ENCODE measurements at regions of chr10 and their contacts with region 1.

Region 1: GRCh38 chr10:72331601-72332422 is 22.9 kb downstream of the DNAJB12 start:
- DNase-seq: peak; percentile 92
- H3K4me3 ChIP-seq: no peak overlapping the region
- H3K27ac ChIP-seq: peak overlapping the region; percentile 73 to 84
- H3K4me1 ChIP-seq: peaks cover 88% of the 10 kb centered on the region
- H3K27me3 ChIP-seq: no peaks in the 10 kb centered on the region
- CTCF ChIP-seq: peak in 2 of 3 experiments; percentile 21 to 51
- POLR2A ChIP-seq: no peak

Region 2: GRCh38 chr10:71893920-71894319 is 437.9 kb before region 1 on chr10:
- intact Hi-C with region 1: loop called (anchors 10 kb)
- DNase-seq: no peak
- H3K4me3 ChIP-seq: no peak overlapping the region
- H3K27ac ChIP-seq: no peak overlapping the region
- H3K4me1 ChIP-seq: peaks cover 5% of the 10 kb centered on the region
- H3K27me3 ChIP-seq: no peaks in the 10 kb centered on the region
- CTCF ChIP-seq: no peak
- POLR2A ChIP-seq: no peak

Region 3: DNA sequence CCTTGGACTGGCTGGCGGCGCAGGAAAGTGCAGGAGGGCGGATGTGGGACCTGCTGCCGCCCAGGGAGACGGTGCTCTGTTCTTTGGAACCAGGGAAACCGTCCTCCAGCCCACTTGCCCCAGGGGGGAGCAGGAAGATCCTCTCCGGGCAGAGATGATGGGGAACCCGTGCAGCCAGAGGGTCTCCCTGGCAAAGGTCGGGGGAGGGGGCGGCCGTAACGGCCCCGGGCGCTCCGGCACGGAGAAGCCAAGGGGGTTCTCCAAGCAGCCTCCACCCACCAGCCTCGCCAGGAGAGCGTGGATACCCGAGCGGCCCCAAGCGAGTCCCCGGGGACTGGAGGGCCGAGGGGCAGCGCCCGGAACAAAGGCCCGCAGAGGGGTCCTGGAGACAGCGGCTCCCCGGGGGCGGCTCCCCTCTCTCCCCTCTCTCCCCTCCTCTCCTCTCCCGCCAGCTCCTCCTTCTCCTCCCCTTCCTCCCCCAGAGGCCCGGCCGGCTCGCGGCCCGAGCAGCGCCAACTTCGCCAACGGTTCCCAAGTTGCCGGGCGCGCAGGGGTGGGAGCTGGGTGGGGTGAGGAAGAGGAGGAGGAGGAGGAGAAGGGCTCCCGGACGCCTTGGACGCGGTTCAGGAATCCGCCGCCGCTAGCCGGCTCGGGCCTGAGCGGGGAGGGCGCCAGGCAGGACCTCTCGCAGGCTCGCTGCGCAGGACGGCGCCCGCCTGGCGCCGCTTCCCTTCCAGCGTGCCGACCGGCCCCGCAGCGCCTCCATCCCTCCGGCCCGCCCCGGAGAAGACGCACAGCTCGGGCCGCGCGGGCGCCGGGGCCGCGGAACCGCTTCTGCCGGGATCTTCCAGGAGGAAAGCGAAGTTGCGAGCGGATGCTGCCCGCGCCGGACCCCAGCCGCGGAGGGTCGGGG is 367.8 kb before region 1 on chr10 and contains the start of gene CHST3:
- intact Hi-C with region 1: loop called (anchors 10 kb)
- DNase-seq: peak; percentile 69
- H3K4me3 ChIP-seq: peak within 1 kb of the TSS; percentile 73 to 86
- H3K27ac ChIP-seq: peak within 1 kb of the TSS; percentile 94 to 97
- H3K4me1 ChIP-seq: peaks cover 36% of the 10 kb centered on the region
- H3K27me3 ChIP-seq: no peaks in the 10 kb centered on the region
- CTCF ChIP-seq: no peak
- POLR2A ChIP-seq: no peak
- total RNA-seq, gene CHST3: 107 to 218 TPM

Region 4: DNA sequence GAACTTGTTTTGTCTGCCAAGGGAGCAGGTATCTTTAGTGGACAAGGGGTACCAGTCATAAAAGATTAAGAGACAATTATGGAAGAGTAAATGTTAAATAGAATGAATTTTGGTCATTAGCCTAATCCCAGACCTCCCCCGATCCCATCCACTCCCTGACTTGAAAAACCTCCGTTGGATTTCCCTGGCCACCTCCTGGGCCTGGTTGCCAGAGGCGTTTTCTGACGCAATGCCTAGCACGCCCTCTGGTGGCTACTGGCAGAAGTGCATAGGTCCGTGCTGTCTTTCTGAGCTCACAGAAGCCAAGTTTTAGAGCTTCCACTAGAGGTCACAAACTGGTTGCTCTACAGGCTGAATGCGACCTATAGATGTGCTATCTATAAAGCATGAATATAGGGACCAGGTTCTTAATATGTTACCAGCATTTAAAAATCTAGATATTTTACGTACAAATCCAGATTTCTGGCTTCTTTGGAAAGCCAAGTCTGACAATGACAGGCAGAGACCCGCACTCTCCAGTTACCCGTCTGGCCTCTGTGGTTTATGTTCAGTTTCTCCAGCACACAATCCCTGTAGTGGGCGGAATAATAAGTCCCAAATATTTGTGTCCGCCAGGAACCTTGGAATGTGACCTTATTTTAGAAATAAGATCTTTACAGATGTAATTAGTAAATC is 283.2 kb before region 1 on chr10:
- intact Hi-C with region 1: loop called (anchors 10 kb)
- DNase-seq: peak; percentile 97
- H3K4me3 ChIP-seq: no peak overlapping the region
- H3K27ac ChIP-seq: no peak overlapping the region
- H3K4me1 ChIP-seq: peaks cover 19% of the 10 kb centered on the region
- H3K27me3 ChIP-seq: no peaks in the 10 kb centered on the region
- CTCF ChIP-seq: peak; percentile 100
- POLR2A ChIP-seq: no peak

Region 5: DNA sequence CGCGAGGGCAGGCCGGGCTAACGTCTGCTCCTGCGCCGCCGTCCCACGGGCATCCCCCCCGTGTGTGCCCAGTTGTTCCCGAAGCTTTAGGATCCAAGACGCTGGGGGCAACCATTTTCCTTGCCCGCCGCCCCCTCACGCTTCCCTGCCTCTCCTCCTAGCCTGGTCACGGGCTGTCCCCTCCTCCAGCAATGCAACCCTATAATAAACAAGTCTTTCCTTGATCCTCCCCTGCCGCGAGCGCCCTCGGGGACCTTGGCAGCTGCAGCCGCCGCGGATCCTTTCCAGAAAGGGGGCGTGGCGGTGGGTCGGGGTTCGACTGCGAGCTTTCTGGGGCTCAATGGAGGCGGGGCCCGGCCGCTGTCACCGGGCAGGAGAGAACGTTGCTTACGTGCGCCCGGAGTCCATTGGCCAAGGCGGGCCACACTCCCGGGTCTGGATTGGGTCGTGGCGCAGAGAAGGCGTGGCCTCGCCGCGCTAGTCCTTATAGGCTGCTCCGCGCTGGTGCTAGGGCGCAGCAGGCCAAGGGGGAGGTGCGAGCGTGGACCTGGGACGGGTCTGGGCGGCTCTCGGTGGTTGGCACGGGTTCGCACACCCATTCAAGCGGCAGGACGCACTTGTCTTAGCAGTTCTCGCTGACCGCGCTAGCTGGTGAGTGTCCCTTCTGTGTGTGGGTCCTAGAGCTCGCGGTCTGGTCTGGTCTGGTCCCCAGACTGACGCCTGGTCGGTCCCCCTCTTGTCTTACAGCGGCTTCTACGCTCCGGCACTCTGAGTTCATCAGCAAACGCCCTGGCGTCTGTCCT is 58.2 kb before region 1 on chr10 and contains the start of gene DDIT4:
- intact Hi-C with region 1: loop called (anchors 10 kb)
- DNase-seq: peak; percentile 99
- H3K4me3 ChIP-seq: peak within 1 kb of the TSS; percentile 93 to 96
- H3K27ac ChIP-seq: peak within 1 kb of the TSS; percentile 95 to 97
- H3K4me1 ChIP-seq: peaks cover 29% of the 10 kb centered on the region
- H3K27me3 ChIP-seq: no peaks in the 10 kb centered on the region
- CTCF ChIP-seq: no peak
- POLR2A ChIP-seq: peak; percentile 100
- total RNA-seq, gene DDIT4: 69.6 to 94.3 TPM